ENCODE measurements at regions of chr10 and their contacts with region 1.

Region 1: DNA sequence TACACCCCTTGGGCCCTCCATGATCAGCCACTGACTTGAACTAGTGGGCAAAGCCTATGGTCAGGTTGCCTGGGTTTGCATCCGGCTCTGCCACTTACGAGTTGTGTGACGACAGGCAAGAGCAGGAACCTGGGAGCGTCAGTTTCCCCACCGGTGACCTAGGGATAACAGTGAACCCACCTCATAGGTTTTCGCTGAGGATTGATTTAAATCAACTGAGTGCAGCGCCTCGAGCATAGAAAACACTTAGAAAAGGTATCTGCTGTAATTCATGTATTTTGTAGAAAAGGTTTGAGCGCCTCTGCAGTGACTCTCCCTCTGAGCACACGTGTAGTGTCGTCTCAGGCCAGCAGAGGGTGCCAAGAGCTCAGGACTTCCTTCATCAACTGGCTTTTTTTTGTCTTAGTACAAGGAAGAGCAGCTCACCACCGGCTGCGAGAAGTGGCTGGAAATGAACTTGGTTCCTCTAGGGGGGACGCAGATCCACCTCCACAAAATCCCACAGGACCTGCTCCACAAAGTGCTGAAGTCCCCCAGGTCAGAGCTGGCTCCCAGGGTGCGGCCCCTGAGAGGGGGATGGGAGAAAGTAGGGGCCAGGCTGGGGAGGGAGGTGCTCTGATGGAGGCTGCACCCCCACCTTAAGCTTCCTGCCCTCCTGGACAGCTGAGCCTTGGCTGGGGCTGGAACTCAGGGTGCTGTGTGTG is 27.7 kb downstream of the BTBD16 start:
- DNase-seq: peak; percentile 80 to 90
- ATAC-seq: peak; percentile 89
- H3K4me3 ChIP-seq: no peak overlapping the region
- H3K27ac ChIP-seq: no peak overlapping the region
- H3K4me1 ChIP-seq: no peaks in the 10 kb centered on the region
- H3K27me3 ChIP-seq: no peaks in the 10 kb centered on the region

Region 2: GRCh38 chr10:121276822-121277221 is 1021.9 kb before region 1 on chr10:
- intact Hi-C with region 1: no loop called
- DNase-seq: no peak
- ATAC-seq: no peak
- H3K4me3 ChIP-seq: no peak overlapping the region
- H3K27ac ChIP-seq: no peak overlapping the region
- H3K4me1 ChIP-seq: no peaks in the 10 kb centered on the region
- H3K27me3 ChIP-seq: no peaks in the 10 kb centered on the region

Region 3: DNA sequence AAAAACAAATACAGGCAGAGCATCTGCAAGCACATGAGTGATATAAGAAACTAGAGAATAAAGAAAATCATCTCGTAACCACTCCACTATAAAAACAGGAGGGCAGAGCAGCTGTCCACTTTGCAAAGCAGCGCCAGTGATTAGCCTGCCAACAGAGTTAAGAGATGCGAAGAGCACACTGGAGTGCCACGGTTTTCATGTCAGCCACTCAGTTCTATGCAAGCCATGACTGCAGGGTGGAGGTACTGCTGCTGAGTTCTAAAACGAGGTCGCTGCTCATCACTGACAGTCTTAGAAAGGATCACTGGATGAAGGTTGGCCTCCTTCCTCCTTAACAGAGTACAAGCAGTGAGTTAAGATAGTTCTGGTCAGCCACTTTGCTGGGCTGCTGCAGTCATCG is 759.0 kb before region 1 on chr10:
- intact Hi-C with region 1: no loop called
- DNase-seq: no peak
- ATAC-seq: no peak
- H3K4me3 ChIP-seq: no peak overlapping the region
- H3K27ac ChIP-seq: no peak overlapping the region
- H3K4me1 ChIP-seq: no peaks in the 10 kb centered on the region
- H3K27me3 ChIP-seq: no peaks in the 10 kb centered on the region

Region 4: DNA sequence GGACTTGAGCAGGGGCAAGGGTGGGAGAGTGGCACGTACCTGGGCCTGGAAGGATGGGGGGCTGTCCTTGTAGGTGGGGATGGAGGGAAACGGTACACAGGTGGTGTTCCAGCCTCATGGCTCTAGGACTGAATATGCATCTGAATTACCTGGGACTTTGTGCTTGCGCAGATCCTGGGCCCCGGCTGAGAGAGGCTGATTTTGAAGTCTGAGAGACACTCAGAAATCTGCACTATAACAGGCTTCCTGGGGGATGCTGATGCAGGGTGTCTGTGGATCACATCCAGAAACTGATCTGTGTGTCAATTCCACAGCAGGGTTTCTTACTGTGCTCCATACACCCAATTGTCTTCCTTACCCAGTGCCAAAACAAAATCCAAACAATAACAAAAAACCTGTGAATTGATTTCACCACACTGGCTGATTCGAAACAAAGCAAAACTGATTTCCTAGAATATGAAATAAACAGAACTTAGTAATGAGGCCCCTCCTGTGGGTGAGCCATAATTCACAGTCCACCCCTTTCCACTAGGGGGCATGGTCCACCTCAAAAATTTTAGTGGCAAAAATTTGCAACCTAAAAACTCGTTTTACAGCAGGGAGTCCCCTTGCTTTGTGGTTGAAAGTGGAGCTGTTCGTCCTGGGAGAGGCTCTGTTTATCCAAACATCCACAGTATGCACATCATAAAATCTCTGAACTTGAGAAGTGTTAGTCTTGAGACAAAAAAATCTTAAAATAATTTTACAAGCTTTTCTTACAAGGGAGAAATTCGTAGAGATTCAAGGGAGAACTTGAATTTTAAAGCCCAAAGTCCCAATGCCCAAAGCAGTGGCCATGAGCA is 43.8 kb after region 1 on chr10:
- intact Hi-C with region 1: loop called (anchors 2 to 5 kb)
- DNase-seq: no peak
- ATAC-seq: peak; percentile 48
- H3K4me3 ChIP-seq: no peak overlapping the region
- H3K27ac ChIP-seq: no peak overlapping the region
- H3K4me1 ChIP-seq: no peaks in the 10 kb centered on the region
- H3K27me3 ChIP-seq: no peaks in the 10 kb centered on the region

Region 5: DNA sequence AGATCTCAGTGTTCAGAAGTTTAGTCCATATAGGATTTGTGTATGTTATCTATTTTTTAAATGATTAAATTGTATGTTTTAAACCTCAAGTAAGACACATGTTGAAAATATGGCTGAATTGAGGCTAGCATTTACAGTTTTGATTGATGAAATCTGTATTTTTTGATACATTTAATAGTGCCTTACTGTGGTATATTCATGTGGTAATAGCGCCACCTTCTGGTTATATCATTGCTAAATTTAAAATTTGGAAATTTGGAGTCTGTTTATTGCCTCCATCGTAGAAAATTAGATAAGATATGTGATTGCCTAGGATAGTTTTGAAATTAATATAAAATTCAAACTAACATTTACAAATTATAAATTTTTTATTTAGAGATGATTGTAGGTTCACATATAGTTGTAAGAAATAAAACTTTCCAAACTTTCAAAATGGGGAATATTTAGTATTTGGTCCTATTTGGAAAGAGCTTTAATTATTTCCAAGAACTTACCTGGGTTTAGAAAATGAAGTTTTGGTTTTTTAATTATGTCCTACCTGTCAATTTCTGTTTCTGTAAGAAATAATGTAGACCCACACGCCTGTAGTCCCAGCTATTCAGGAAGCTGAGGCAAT is 136.6 kb after region 1 on chr10:
- intact Hi-C with region 1: loop called (anchors 2 kb)
- DNase-seq: no peak
- ATAC-seq: no peak
- H3K4me3 ChIP-seq: no peak overlapping the region
- H3K27ac ChIP-seq: no peak overlapping the region
- H3K4me1 ChIP-seq: no peaks in the 10 kb centered on the region
- H3K27me3 ChIP-seq: no peaks in the 10 kb centered on the region

Region 6: GRCh38 chr10:122446668-122447423 is 148.1 kb after region 1 on chr10:
- intact Hi-C with region 1: no loop called
- DNase-seq: no peak
- ATAC-seq: no peak
- H3K4me3 ChIP-seq: no peak overlapping the region
- H3K27ac ChIP-seq: no peak overlapping the region
- H3K4me1 ChIP-seq: peaks cover 0 to 2% of the 10 kb centered on the region in 2 donors
- H3K27me3 ChIP-seq: no peaks in the 10 kb centered on the region

Region 7: DNA sequence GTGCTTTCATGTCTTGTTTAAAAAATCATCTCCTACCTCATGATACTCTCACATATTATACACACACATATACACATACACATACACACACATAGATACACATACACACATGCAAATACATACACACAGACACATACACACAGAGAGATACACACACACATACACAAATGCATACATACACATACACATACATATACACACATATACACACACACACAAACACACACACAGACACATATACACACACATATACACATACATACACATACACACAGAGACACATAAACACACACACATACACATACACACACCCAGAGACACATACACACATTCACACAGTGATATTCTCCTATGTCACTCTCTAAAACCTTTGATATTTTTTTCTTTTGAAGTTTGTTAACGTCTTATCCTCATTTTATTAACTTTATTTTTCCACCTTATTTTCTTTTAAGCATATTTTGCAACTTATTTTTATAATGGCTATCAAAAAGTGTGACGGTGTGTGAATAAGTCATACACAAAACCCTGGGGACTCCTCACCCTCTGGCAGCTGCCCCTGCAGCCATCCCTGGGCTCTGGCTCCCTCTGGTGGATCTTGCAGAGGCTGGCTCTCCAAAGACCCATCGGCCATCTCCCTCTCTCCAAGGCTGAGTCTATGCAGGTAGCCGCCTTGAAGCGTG is 404.8 kb after region 1 on chr10:
- intact Hi-C with region 1: loop called in 1 of 2 experiments (anchors 10 kb)
- DNase-seq: peak; percentile 73 to 86
- ATAC-seq: peak; percentile 77
- H3K4me3 ChIP-seq: no peak overlapping the region
- H3K27ac ChIP-seq: no peak overlapping the region
- H3K4me1 ChIP-seq: no peaks in the 10 kb centered on the region
- H3K27me3 ChIP-seq: no peaks in the 10 kb centered on the region

Measured in aorta (tissue), 5 donors.